HEK293 (cell line): ENCODE measurements at regions of chr1 and their contacts with region 1.

Region 1: DNA sequence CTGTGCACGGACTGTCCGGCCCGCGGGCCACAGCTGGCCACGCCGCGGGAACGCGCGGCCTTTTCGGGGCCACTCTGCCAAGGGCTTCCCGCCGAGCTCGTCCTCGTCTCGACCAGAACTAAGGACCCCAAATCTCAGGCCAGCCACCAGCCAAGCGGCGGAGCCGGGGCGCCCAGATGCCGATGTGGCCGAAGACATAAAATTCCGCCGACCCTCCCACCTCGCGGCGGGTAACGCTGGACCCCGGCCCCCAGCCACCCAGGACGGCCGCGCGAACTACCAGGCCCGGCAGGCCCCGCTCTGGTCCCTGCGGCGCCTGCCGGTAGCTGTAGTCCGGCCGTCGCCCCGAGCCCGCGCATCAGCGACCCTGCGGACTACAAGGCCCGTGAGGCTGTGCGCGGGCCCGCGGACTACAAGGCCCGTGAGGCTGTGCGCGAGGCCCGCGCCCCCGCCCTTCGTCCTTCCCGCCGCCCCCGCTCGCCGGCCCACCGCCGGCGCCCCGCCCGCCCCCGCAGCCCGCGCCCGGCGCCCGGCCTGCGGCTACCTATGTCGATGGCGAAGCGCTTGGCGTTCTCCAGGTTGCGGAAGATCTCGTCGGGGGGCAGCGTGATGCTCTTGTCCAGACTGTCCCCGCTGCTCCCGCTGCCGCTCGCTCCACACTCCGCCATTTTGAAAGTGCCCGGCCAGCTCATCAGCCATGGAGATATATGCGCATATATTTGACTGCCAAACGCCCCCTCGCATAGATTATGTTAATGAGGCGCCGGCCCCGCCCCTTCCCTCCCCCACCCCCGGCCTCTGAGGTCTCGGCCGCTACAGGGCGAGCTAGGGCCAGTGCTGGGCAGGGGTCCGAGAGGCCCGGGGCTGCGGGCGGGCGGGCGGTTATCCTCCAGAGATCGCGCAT is at the start of gene PANK4:
- H3K4me3 ChIP-seq: peak within 1 kb of the TSS; percentile 90
- H3K27ac ChIP-seq: peak within 1 kb of the TSS; percentile 81
- H3K4me1 ChIP-seq: peaks cover 23% of the 10 kb centered on the region
- CTCF ChIP-seq: no peak

Region 2: DNA sequence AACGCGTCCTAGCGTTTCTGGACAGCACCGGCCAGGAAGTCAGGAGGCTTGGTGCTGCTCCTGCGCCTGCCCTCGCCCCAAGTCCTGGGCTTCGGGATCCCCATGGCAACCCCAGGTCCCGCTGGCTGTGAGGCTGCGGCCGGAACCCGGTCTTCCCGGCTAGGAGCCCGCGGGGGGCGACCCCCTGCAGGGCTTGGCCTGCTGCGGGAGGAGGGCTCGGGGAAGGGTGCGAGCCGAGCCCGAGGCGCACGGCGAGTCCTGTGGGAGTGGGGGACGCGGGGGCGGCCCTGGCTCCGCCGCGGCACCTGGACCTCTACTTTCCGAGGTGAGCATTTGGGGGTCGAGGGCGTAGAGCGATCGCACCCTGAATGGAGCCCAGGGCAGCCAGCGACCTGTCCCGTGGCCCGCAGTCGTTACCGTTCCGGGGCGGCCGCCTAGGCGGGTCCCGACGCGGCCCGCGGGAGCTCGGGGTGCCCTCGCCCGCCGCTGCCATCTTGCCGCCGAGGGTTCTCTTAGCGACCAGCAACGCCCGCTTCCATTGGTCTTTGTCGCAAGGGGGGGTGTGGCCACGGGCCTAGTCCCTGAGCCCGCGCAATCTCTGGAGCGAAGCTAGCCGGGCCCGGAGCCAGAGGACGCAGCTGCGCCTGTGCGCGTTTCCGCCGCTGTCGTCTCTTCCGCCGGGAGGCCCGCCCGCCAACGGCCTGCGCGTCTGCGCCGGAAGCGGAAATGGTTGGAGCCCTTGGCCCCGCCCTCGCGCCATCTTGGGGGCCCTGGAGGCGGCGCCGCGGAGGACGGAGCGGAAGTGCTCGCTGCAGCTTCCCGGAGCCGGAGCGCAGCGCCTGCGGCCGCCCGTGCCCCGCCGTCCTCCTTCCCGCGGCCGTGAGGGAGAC is 134.9 kb before region 1 on chr1 and contains the starts of genes MORN1 and RER1:
- CTCF ChIA-PET with region 1: no interaction called
- POLR2A ChIA-PET with region 1: interaction called, 12 read pairs
- H3K4me3 ChIP-seq: peak within 1 kb of the TSS; percentile 93
- H3K27ac ChIP-seq: peak within 1 kb of the TSS; percentile 75
- H3K4me1 ChIP-seq: peaks cover 3% of the 10 kb centered on the region; the same call in 1 of the 2 replicates
- CTCF ChIP-seq: no peak

Region 3: DNA sequence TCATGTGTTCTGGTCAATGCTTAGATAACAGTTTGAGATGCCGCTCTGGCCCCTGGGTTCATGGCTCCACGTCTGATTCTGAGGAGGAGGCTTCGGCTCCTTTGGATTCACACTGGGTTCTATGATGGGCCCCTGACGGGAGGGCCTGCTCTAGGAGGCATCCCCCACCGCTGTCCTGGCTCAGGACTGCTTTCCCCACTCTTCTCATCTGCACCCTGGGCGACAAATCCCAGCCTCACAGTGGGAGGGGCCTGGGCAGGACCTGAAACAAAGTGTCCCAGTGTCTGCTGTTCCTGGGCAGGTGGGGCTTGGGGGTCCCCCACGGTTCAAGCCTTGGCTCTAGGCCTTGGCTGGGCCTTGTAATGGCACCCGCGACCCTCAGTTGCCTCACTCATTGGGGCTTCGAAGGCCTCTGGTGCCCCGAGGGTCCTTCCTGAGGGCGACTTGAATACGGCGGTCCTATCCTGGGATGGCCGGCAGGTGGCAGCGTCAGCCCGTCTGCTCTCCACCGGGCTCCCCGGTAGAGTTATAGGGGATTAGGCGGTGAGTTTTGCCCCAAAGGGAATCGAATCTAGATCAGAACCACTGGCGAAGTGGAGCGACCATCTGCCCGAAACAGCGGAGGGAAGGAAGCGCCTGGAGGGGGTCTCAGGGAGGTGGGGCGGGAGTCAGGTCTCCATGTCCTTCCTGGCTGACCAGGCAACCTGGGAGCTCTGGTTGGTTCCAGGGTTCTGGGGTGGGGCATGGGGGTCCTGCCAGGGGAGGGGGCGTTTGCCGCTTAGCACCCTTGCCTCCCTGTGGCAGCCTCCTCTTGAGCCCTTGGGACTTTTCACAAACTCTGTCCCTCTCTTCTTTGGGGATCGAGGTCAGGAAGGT is 111.9 kb before region 1 on chr1:
- CTCF ChIA-PET with region 1: no interaction called
- POLR2A ChIA-PET with region 1: interaction called, 12 read pairs
- H3K4me3 ChIP-seq: no peak overlapping the region
- H3K27ac ChIP-seq: no peak overlapping the region
- H3K4me1 ChIP-seq: no peaks in the 10 kb centered on the region
- CTCF ChIP-seq: peak; percentile 88

Region 4: DNA sequence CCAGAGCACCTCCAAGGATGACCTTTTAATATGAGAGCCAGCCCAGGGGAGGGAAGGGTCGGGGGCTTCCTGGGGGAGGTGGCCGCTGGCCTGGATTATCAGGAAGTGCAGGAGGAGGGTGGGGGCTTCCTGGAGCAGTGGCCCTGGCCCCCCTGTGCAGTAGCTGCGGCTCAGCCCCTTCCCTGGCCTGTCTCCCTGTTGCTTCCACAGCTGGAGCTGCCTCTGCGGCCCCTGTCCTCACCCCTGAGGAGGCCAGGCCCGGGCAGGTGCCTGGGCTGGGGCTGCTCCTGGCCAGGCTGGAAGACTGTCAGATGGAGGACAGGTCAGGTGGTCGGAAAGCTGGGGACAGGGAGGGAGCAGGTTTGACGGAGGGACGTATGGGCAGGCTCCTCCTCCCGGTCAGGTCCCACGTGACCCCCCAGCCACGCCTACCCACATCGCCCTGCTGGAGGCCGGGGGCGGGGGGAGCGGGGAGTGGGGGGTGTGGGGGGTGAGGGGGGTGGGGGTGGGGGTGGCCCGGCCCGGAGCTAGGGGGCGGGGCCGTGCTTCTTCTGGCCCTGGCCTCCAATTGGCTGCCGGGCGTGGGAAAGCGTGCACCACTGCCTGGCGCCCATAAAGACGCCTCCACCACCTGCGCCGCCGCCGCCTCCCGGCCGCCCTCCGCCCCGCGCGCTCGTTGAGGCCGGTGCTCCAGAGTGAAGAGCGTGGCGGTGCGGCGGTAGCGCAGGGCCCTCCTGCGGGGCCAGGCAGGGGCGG is 19.8 kb after region 1 on chr1:
- CTCF ChIA-PET with region 1: interaction called, 20 read pairs
- POLR2A ChIA-PET with region 1: interaction called, 33 read pairs
- H3K4me3 ChIP-seq: peak overlapping the region; percentile 41
- H3K27ac ChIP-seq: peak overlapping the region; percentile 73; the same call in 1 of the 2 replicates
- H3K4me1 ChIP-seq: peaks cover 6% of the 10 kb centered on the region
- CTCF ChIP-seq: no peak